Common myeloid progenitor, CD34-positive (primary cell): ENCODE measurements at regions of chr17 and their contacts with region 1.

Region 1: GRCh38 chr17:74296548-74296936 is 22.5 kb downstream of the DNAI2 start:
- DNase-seq: peak; percentile 82 to 88 (median 84)
- H3K4me3 ChIP-seq: no peak overlapping the region
- H3K27ac ChIP-seq: peak overlapping the region in 1 of 2 experiments; percentile 44
- H3K4me1 ChIP-seq: peaks cover 0 to 8% (median 0%) of the 10 kb centered on the region in 4 experiments
- H3K27me3 ChIP-seq: no peaks in the 10 kb centered on the region

Region 2: GRCh38 chr17:74210191-74211140 is 86.1 kb before region 1 on chr17:
- CTCF ChIA-PET with region 1: interaction called, 11 read pairs
- POLR2A ChIA-PET with region 1: no interaction called
- DNase-seq: peak; percentile 70 to 88 (median 85)
- H3K4me3 ChIP-seq: no peak overlapping the region
- H3K27ac ChIP-seq: no peak overlapping the region
- H3K4me1 ChIP-seq: peaks cover 2 to 53% (median 36%) of the 10 kb centered on the region in 4 experiments
- H3K27me3 ChIP-seq: peaks cover 0 to 15% (median 3%) of the 10 kb centered on the region in 5 experiments

Region 3: DNA sequence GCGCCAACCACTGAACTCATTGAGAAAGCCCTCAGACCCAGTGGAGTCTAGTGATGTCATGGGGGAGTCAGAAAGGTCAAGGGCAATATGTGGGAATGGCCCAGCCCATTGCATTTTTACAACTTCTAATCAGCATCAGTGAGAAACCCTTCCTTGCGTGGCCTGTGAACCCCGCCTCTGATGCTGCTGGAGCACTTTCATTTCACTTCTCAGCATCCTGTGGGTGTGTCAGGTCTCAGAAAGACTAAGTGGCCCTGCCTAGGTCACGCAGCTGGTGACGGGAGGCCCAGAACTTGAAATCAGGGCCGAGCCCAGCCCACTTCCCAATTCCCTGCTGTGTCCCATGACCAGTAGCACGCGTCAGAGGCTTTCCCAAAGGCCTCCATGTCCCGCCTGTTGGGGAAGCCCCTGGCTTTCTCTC is 16.4 kb before region 1 on chr17:
- CTCF ChIA-PET with region 1: interaction called, 11 read pairs
- POLR2A ChIA-PET with region 1: no interaction called
- DNase-seq: no peak
- H3K4me3 ChIP-seq: no peak overlapping the region
- H3K27ac ChIP-seq: no peak overlapping the region
- H3K4me1 ChIP-seq: peaks cover 5 to 21% (median 20%) of the 10 kb centered on the region in 4 experiments
- H3K27me3 ChIP-seq: peaks cover 0 to 3% (median 0%) of the 10 kb centered on the region in 5 experiments

Region 4: DNA sequence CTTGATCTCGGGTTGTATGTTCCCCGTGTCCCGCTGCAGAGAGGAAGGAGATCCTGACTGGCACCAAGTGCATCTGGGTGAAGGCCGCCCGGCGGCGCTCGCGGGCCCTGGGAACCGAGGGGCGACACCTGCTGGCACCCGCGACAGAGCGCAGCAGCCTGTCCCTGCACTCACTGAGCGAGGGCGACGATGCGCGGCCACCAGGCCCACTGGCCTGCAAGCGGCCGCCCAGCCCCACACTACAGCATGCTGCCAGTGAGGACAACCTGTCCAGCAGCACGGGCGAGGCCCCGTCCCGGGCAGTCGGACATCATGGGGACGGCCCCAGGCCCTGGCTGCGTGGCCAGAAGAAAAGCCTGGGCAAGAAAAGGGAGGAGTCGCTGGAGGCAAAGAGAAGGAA is 57.6 kb after region 1 on chr17:
- CTCF ChIA-PET with region 1: interaction called, 42 read pairs
- POLR2A ChIA-PET with region 1: no interaction called
- DNase-seq: peak; percentile 79 to 81 (median 81)
- H3K4me3 ChIP-seq: peak overlapping the region in 1 of 7 experiments; percentile 28
- H3K27ac ChIP-seq: no peak overlapping the region
- H3K4me1 ChIP-seq: peaks cover 0 to 31% (median 21%) of the 10 kb centered on the region in 4 experiments
- H3K27me3 ChIP-seq: peaks cover 0 to 91% (median 40%) of the 10 kb centered on the region in 5 experiments

Region 5: DNA sequence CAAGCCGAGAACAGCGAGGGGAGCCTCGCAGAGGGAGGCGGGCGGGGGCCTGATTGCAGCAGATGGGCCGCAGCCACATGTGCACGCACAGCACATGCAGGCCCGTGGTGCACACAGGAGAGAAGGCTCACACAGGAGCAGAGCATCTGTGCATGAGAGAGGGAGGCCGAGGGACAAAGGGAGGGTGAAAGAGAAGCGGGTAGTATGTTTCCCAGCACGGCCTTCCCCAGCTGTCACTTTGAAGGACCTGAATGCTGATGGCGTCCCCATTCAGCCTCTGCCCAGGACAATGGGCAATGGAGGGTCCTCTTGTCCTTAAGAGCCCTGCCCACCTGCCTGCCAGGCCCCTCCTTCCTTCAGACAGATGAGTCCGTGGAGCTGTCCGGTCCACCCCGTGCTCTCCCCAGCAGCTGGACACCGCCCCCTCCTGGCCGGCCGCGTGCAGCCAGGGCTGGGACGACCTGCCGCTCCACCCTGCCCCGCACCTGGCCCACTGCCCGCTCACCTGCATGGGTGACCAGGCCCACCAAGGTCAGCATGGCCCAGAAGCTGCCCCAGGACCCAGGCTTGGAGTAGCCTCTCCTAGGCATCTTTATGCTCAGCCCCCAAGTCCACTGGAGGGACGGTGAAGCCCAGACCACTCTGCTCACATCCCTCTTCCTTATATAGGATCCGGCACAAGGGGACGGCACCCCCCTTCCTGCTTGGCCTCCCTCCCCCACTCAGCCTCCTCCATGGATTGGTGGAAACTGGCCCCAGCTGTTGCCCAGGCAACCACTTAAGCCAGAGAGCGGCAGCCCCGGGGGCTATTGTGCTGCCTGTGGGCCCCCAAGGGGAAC is 64.9 kb after region 1 on chr17 and contains the start of gene BTBD17:
- CTCF ChIA-PET with region 1: interaction called, 42 read pairs
- POLR2A ChIA-PET with region 1: no interaction called
- DNase-seq: peak in 2 of 3 donors; percentile 31 to 39
- H3K4me3 ChIP-seq: no peak within 1 kb of the TSS
- H3K27ac ChIP-seq: no peak within 1 kb of the TSS
- H3K4me1 ChIP-seq: peaks cover 0 to 29% (median 23%) of the 10 kb centered on the region in 4 experiments
- H3K27me3 ChIP-seq: peaks cover 0 to 38% (median 15%) of the 10 kb centered on the region in 5 experiments